SK-N-SH (cell line): ENCODE measurements at regions of chr3 and their contacts with region 1.

Region 1: GRCh38 chr3:66971891-66972551 is 26.1 kb upstream of the KBTBD8 start:
- DNase-seq: peak; percentile 69
- H3K4me3 ChIP-seq: peak overlapping the region; percentile 24 to 45
- H3K27ac ChIP-seq: no peak overlapping the region
- H3K4me1 ChIP-seq: no peaks in the 10 kb centered on the region; a peak in 1 of 4 replicates
- H3K27me3 ChIP-seq: peaks cover 9% of the 10 kb centered on the region; the same call in 1 of the 2 replicates
- CTCF ChIP-seq: peak; percentile 81
- EP300 ChIP-seq: no peak
- RAD21 ChIP-seq: peak; percentile 83

Region 2: GRCh38 chr3:66703501-66703900 is 268.5 kb before region 1 on chr3:
- CTCF ChIA-PET with region 1: no interaction called
- POLR2A ChIA-PET with region 1: no interaction called
- DNase-seq: no peak
- H3K4me3 ChIP-seq: no peak overlapping the region
- H3K27ac ChIP-seq: no peak overlapping the region
- H3K4me1 ChIP-seq: no peaks in the 10 kb centered on the region
- H3K27me3 ChIP-seq: no peaks in the 10 kb centered on the region
- CTCF ChIP-seq: no peak
- EP300 ChIP-seq: no peak
- RAD21 ChIP-seq: no peak

Region 3: GRCh38 chr3:66912306-66912705 is 59.7 kb before region 1 on chr3:
- CTCF ChIA-PET with region 1: no interaction called
- POLR2A ChIA-PET with region 1: no interaction called
- DNase-seq: no peak
- H3K4me3 ChIP-seq: no peak overlapping the region
- H3K27ac ChIP-seq: no peak overlapping the region
- H3K4me1 ChIP-seq: no peaks in the 10 kb centered on the region
- H3K27me3 ChIP-seq: no peaks in the 10 kb centered on the region
- CTCF ChIP-seq: no peak
- EP300 ChIP-seq: no peak
- RAD21 ChIP-seq: no peak

Region 4: GRCh38 chr3:66923969-66924368 is 48.1 kb before region 1 on chr3:
- CTCF ChIA-PET with region 1: no interaction called
- POLR2A ChIA-PET with region 1: no interaction called
- DNase-seq: no peak
- H3K4me3 ChIP-seq: no peak overlapping the region
- H3K27ac ChIP-seq: no peak overlapping the region
- H3K4me1 ChIP-seq: no peaks in the 10 kb centered on the region
- H3K27me3 ChIP-seq: no peaks in the 10 kb centered on the region
- CTCF ChIP-seq: no peak
- EP300 ChIP-seq: no peak
- RAD21 ChIP-seq: no peak

Region 5: GRCh38 chr3:66938338-66938963 is 33.6 kb before region 1 on chr3:
- CTCF ChIA-PET with region 1: interaction called, 21 read pairs
- POLR2A ChIA-PET with region 1: no interaction called
- DNase-seq: peak; percentile 36
- H3K4me3 ChIP-seq: no peak overlapping the region
- H3K27ac ChIP-seq: no peak overlapping the region
- H3K4me1 ChIP-seq: no peaks in the 10 kb centered on the region
- H3K27me3 ChIP-seq: no peaks in the 10 kb centered on the region
- CTCF ChIP-seq: peak; percentile 74
- EP300 ChIP-seq: no peak
- RAD21 ChIP-seq: peak; percentile 80

Region 6: GRCh38 chr3:66952357-66952756 is 19.7 kb before region 1 on chr3:
- CTCF ChIA-PET with region 1: interaction called, 13 read pairs
- POLR2A ChIA-PET with region 1: no interaction called
- DNase-seq: no peak
- H3K4me3 ChIP-seq: no peak overlapping the region
- H3K27ac ChIP-seq: no peak overlapping the region
- H3K4me1 ChIP-seq: no peaks in the 10 kb centered on the region
- H3K27me3 ChIP-seq: no peaks in the 10 kb centered on the region
- CTCF ChIP-seq: no peak
- EP300 ChIP-seq: no peak
- RAD21 ChIP-seq: no peak

Region 7: DNA sequence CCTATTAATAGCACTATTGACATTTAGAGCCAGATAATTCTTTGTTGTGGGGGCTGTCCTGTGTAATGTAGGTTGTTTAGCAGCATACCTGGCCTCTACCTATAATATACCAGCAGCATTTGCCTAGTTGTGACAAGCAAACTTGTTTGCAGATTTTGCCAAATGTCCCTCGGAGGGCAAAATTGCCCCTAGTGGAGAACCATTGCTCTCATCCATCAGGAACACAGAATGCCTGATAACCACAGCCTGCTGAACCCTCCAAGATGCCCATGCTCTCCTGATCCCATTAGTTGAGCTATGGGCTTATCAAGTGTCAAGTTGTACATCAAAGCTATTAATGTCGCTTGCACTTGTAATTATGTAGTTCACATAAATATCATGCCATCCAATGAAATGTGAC is 11.1 kb after region 1 on chr3:
- CTCF ChIA-PET with region 1: interaction called, 28 read pairs
- POLR2A ChIA-PET with region 1: no interaction called
- DNase-seq: no peak
- H3K4me3 ChIP-seq: no peak overlapping the region
- H3K27ac ChIP-seq: no peak overlapping the region
- H3K4me1 ChIP-seq: no peaks in the 10 kb centered on the region
- H3K27me3 ChIP-seq: no peaks in the 10 kb centered on the region
- CTCF ChIP-seq: no peak
- EP300 ChIP-seq: no peak
- RAD21 ChIP-seq: no peak

Region 8: GRCh38 chr3:66989860-66990665 is 18.0 kb after region 1 on chr3:
- CTCF ChIA-PET with region 1: interaction called, 28 read pairs
- POLR2A ChIA-PET with region 1: no interaction called
- DNase-seq: no peak
- H3K4me3 ChIP-seq: no peak overlapping the region
- H3K27ac ChIP-seq: no peak overlapping the region
- H3K4me1 ChIP-seq: no peaks in the 10 kb centered on the region
- H3K27me3 ChIP-seq: no peaks in the 10 kb centered on the region
- CTCF ChIP-seq: peak; percentile 27; the same call in 1 of the 2 replicates
- EP300 ChIP-seq: no peak
- RAD21 ChIP-seq: no peak